BJ (cell line): ENCODE measurements at regions of chr11 and their contacts with region 1.

Region 1: DNA sequence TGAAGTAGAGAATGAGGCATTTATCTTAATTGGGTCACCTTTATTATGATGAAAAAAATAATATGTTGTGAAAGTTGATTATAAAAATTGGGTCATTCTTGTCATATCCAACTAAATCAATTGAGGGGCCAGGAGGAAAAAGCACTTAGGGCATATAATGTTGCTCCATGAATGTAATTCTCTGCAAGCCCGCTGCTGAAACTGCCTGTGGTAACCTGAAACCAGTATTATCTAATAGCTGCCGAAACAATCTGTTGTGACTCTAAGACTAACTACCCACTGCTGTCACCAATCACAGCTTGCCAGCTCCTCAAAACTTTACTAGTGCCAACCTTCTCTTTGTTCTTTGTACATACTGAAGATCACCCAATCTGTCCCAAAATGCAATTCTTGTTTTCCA is 115.8 kb downstream of the ATG16L2 start:
- DNase-seq: no peak
- H3K4me3 ChIP-seq: no peak overlapping the region
- H3K27me3 ChIP-seq: no peaks in the 10 kb centered on the region
- CTCF ChIP-seq: no peak

Region 2: GRCh38 chr11:72975778-72976521 is 45.9 kb after region 1 on chr11:
- CTCF ChIA-PET with region 1: no interaction called
- POLR2A ChIA-PET with region 1: interaction called, 12 read pairs
- DNase-seq: peak; percentile 87
- H3K4me3 ChIP-seq: no peak overlapping the region
- H3K27me3 ChIP-seq: no peaks in the 10 kb centered on the region
- CTCF ChIP-seq: no peak

Region 3: DNA sequence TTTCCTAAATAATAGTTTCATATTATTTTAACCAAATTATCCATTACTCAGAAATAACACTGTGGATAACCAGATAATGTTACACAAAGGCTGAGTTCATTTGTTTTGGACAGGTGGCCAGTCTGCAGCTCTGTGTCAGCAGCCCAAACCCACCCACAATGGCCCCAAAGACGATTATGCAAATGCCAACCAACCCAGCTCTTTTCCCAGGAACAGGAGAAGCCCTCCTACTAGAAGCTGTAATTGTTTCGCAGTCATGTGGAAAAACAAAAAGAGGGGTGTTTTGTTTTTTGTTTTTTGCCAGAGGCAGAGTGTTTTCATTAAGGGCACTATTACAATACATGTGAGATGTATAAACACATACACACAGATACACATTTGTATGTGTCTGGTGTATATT is 110.0 kb after region 1 on chr11:
- CTCF ChIA-PET with region 1: no interaction called
- POLR2A ChIA-PET with region 1: no interaction called
- DNase-seq: no peak
- H3K4me3 ChIP-seq: no peak overlapping the region
- H3K27me3 ChIP-seq: no peaks in the 10 kb centered on the region
- CTCF ChIP-seq: no peak